Posterior cingulate gyrus (tissue), 11 donors: ENCODE measurements at regions of chr10 and their contacts with region 1.

Region 1: DNA sequence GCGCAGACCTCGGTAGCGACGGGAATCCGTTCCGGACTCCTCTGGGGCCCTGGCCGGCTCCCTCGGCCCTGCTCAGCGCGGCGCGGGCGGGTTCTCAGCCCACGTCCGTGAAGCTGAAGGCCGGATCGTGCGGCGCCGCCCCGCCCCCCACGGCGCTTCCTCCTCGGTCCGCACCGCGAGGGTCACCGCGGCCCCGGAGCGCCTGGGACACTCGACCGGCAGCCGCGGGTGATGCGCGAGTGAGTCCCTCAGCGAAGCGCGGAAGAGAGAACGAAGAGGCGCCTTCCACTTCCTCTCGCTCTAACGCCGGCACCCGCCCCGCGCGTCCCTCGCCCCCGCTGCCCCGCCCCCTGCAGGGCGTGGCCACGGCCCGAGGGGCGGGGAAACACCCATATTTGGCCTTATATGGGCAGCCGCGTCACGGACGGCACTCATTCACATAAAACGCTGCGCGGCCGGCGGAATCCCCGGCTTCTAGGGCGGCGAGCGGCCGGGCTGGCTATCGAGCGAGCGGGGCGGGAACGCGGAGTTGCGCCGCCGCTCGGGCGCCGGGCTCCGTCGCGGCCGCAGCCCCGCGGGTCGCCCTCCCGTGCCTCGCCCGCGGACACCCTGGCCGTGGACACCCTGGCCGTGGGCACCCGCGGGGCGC is at the start of gene DUSP5:
- DNase-seq: peak; percentile 81 to 99 (median 92)

Region 2: GRCh38 chr10:110252151-110252550 is 245.4 kb before region 1 on chr10:
- intact Hi-C with region 1: no loop called
- DNase-seq: no peak

Region 3: GRCh38 chr10:110354322-110354766 is 143.2 kb before region 1 on chr10:
- intact Hi-C with region 1: loop called (anchors 5 kb)
- DNase-seq: peak; percentile 33 to 95 (median 77)